ENCODE measurements at regions of chr19 and their contacts with region 1.

Region 1: DNA sequence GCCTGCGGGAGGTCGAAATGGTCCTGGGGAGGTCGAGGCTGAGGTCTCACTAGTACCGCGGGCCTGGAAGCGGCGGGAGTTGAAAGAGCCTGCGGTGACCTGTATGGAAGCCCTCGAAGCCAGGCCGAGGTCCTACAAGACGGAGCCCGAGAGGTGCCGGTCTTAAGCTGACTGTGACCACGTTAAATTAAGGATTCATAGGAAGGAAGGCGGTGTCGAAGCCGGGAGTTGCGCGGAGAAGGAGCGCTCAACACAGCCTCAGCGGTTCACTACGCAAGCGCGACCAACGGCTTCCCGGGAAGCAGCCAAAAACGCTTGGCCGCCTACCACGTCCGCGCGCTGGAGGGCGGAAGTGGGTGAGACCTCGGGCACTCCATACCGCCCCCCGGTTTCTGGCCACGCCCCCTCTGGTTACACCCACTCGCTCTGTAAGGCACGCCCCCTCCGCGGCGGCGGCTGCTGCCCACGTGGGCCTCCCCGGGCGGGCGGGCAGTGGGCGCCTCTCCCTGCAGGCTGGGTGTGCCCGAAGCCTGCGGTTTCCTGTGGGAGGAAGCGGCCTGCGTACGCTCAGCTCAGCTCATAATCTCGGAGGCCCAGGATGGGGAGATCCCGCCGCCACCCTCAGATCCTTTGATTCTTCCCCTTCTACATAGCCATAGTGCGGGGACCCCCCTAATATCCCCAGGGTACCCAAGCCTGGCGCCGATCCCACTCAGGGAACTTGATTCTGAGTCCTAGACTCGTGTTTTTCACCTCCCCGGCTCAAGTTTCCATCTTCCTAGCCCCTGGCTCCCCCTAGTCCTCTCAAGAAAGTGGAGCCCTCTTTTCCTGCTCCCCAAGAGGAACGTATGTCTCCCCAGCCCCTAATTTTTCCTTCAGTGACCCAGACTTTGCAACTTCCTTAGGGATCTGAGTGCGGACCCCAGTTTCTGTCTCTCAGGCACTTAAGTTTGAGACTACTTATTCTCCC is 3.4 kb upstream of the EMP3 start:
- DNase-seq: peak; percentile 97
- ATAC-seq: peak; percentile 85 to 92
- H3K4me3 ChIP-seq: peak overlapping the region; percentile 60 to 83 (median 77)
- H3K27ac ChIP-seq: peak overlapping the region; percentile 85 to 100 (median 98)
- H3K4me1 ChIP-seq: peaks cover 18 to 29% of the 10 kb centered on the region in 2 donors
- H3K27me3 ChIP-seq: no peaks in the 10 kb centered on the region
- CTCF ChIP-seq: peak in 1 of 5 experiments; percentile 31
- POLR2A ChIP-seq: peak; percentile 67 to 81

Region 2: GRCh38 chr19:48284896-48285295 is 37.0 kb before region 1 on chr19:
- in situ Hi-C with region 1: no loop called
- intact Hi-C with region 1: no loop called
- DNase-seq: no peak
- ATAC-seq: no peak
- H3K4me3 ChIP-seq: no peak overlapping the region
- H3K27ac ChIP-seq: no peak overlapping the region
- H3K4me1 ChIP-seq: no peaks in the 10 kb centered on the region
- H3K27me3 ChIP-seq: peaks cover 0 to 4% (median 0%) of the 10 kb centered on the region in 3 donors
- CTCF ChIP-seq: no peak
- POLR2A ChIP-seq: no peak

Region 3: GRCh38 chr19:48332662-48333466 is 11.0 kb after region 1 on chr19:
- in situ Hi-C with region 1: no loop called
- intact Hi-C with region 1: loop called (anchors 1 kb)
- DNase-seq: peak; percentile 85 to 90
- ATAC-seq: peak; percentile 87 to 92
- H3K4me3 ChIP-seq: peak overlapping the region; percentile 49 to 58 (median 52)
- H3K27ac ChIP-seq: peak overlapping the region; percentile 82 to 84 (median 83)
- H3K4me1 ChIP-seq: peaks cover 10 to 15% of the 10 kb centered on the region in 2 donors
- H3K27me3 ChIP-seq: no peaks in the 10 kb centered on the region
- CTCF ChIP-seq: no peak
- POLR2A ChIP-seq: peak; percentile 11 to 47

Region 4: GRCh38 chr19:48342841-48343540 is 21.1 kb after region 1 on chr19:
- in situ Hi-C with region 1: no loop called
- intact Hi-C with region 1: no loop called
- DNase-seq: no peak
- ATAC-seq: no peak
- H3K4me3 ChIP-seq: no peak overlapping the region
- H3K27ac ChIP-seq: no peak overlapping the region
- H3K4me1 ChIP-seq: peaks cover 6 to 8% of the 10 kb centered on the region in 2 donors
- H3K27me3 ChIP-seq: no peaks in the 10 kb centered on the region
- CTCF ChIP-seq: no peak
- POLR2A ChIP-seq: no peak

Region 5: DNA sequence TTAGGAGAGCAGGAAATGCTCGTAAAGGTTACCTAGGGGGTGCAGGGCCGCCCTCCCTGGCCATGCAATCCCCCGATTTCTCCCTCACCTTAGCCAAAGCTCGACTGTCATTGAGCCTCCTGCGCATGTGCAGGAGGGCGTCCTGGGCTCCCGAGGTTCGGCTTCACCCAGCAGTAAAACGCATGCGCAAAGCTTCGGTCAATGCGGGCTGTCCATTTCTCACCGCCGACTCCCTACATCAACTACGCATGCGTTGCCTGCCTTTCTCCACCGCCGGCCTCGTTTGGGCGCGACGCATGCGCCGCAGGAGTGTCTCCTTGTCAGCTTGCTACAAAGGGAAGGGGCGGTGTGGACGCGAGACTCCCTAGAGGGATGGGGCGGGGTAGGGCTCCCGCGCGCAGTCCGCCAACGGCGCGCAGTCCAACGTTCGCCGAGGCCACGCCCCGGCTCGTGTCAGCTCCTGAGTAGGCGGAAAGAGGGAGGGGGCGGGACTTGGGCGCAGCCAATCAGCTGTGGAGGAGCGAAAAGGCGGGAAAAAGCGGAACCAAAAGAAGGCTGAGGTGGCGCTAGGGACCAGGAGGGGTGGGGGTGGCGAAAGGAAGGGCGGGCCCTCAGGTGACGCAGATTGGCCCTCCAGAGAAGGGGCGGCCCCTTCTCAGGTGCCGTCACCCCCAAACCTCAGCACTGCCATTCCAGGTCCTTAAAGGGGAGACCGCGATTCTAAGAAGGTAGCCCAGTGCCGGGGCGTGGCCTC is 42.1 kb after region 1 on chr19 and contains the starts of genes SYNGR4 and TMEM143:
- in situ Hi-C with region 1: no loop called
- intact Hi-C with region 1: loop called (anchors 1 kb)
- DNase-seq: peak; percentile 98 to 99
- ATAC-seq: peak; percentile 94 to 97
- H3K4me3 ChIP-seq: peak within 1 kb of the TSS; percentile 75 to 99 (median 84)
- H3K27ac ChIP-seq: peak within 1 kb of the TSS; percentile 97 to 100 (median 99)
- H3K4me1 ChIP-seq: peaks cover 4 to 10% of the 10 kb centered on the region in 2 donors
- H3K27me3 ChIP-seq: no peaks in the 10 kb centered on the region
- CTCF ChIP-seq: no peak
- POLR2A ChIP-seq: peak in 1 of 2 donors; percentile 35
- total RNA-seq, gene SYNGR4: not detected
- total RNA-seq, gene TMEM143: 28.8 to 42.3 (median 40.7) TPM

Region 6: GRCh38 chr19:48391107-48391986 is 69.4 kb after region 1 on chr19 and contains the start of gene KDELR1:
- in situ Hi-C with region 1: no loop called
- intact Hi-C with region 1: loop called (anchors 1 kb)
- DNase-seq: peak; percentile 58 to 66
- ATAC-seq: peak; percentile 91 to 92
- H3K4me3 ChIP-seq: peak within 1 kb of the TSS; percentile 83 to 100 (median 92)
- H3K27ac ChIP-seq: peak within 1 kb of the TSS; percentile 85 to 91 (median 88)
- H3K4me1 ChIP-seq: peaks cover 4 to 19% of the 10 kb centered on the region in 2 donors
- H3K27me3 ChIP-seq: peaks cover 36 to 41% (median 41%) of the 10 kb centered on the region in 3 donors
- CTCF ChIP-seq: peak; percentile 78 to 96 (median 87)
- POLR2A ChIP-seq: peak; percentile 60 to 68
- total RNA-seq, gene KDELR1: 44.9 to 64.7 (median 54.0) TPM

Region 7: GRCh38 chr19:48445606-48446481 is 123.9 kb after region 1 on chr19 and contains the start of gene GRWD1:
- in situ Hi-C with region 1: no loop called
- intact Hi-C with region 1: loop called (anchors 5 kb)
- DNase-seq: peak; percentile 79 to 85
- ATAC-seq: peak; percentile 91 to 93
- H3K4me3 ChIP-seq: peak within 1 kb of the TSS; percentile 93 to 98 (median 96)
- H3K27ac ChIP-seq: peak within 1 kb of the TSS; percentile 87 to 92 (median 90)
- H3K4me1 ChIP-seq: peaks cover 18 to 22% of the 10 kb centered on the region in 2 donors
- H3K27me3 ChIP-seq: peaks cover 23 to 27% (median 25%) of the 10 kb centered on the region in 3 donors
- CTCF ChIP-seq: no peak
- POLR2A ChIP-seq: peak; percentile 49 to 79
- total RNA-seq, gene GRWD1: 27.8 to 36.0 (median 31.2) TPM

Region 8: DNA sequence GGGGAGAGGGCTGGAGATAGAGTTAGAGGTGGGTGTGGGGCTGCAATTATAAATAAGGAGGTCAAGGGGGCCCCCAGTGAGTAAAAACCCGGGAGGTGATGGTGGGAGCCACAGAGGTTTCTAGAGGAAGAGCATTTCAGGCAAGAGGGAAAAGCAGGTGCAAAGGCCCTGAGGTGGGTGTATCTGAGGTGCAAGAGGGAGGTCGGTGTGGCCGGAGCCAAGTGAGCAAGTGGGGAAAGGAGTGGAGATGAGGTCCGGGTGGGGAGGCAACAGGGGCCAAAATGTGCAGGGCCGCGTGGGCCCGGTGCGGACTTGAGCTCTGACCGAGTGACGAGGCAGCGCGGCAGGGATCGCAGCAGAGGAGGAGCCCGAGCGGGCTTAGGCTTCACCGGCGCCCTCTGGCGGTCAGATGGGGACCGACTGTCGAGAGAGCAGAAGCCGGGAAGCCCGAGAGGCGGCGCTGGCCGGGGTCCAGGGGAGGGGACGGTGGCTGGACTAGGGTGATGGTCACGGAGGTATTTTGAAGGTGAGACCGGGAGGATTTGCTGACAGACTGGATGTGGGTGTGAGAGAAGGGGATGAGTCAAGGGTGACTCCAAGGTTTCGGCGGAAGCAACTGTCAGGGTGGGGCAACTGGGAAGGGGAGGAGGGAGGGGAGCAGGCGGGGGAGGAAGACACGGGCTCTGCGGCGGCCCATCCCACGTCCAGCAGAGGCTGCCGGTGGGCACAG is 266.9 kb after region 1 on chr19:
- in situ Hi-C with region 1: loop called in 2 of 4 experiments (anchors 25 kb)
- intact Hi-C with region 1: loop called (anchors 5 kb)
- DNase-seq: peak; percentile 73 to 83
- ATAC-seq: peak; percentile 67 to 72
- H3K4me3 ChIP-seq: peak overlapping the region; percentile 41 to 50 (median 49)
- H3K27ac ChIP-seq: peak overlapping the region in 1 of 4 donors; percentile 32
- H3K4me1 ChIP-seq: peaks cover 4 to 5% of the 10 kb centered on the region in 2 donors
- H3K27me3 ChIP-seq: no peaks in the 10 kb centered on the region
- CTCF ChIP-seq: peak; percentile 74 to 98 (median 93)
- POLR2A ChIP-seq: no peak